Uterus (tissue), 4 donors: ENCODE measurements at regions of chr4 and their contacts with region 1.

Region 1: GRCh38 chr4:38675146-38676121 is 11.4 kb downstream of the KLF3 start:
- DNase-seq: peak; percentile 74 to 85
- H3K4me3 ChIP-seq: no peak overlapping the region
- H3K27ac ChIP-seq: peak overlapping the region; percentile 93 to 99
- H3K4me1 ChIP-seq: peaks cover 36 to 50% of the 10 kb centered on the region in 2 donors
- H3K27me3 ChIP-seq: no peaks in the 10 kb centered on the region
- CTCF ChIP-seq: peak; percentile 86 to 97 (median 90)
- POLR2A ChIP-seq: no peak

Region 2: GRCh38 chr4:38062088-38062893 is 613.1 kb before region 1 on chr4:
- intact Hi-C with region 1: loop called (anchors 10 kb)
- DNase-seq: peak; percentile 80 to 87
- H3K4me3 ChIP-seq: peak overlapping the region in 1 of 2 donors; percentile 33
- H3K27ac ChIP-seq: peak overlapping the region; percentile 74 to 88
- H3K4me1 ChIP-seq: peaks cover 9 to 10% of the 10 kb centered on the region in 2 donors
- H3K27me3 ChIP-seq: no peaks in the 10 kb centered on the region
- CTCF ChIP-seq: peak; percentile 68 to 86 (median 80)
- POLR2A ChIP-seq: no peak

Region 3: GRCh38 chr4:38179690-38180377 is 495.6 kb before region 1 on chr4:
- intact Hi-C with region 1: loop called (anchors 10 kb)
- DNase-seq: peak; percentile 66 to 74
- H3K4me3 ChIP-seq: no peak overlapping the region
- H3K27ac ChIP-seq: peak overlapping the region in 1 of 2 donors; percentile 31
- H3K4me1 ChIP-seq: peaks cover 0 to 5% of the 10 kb centered on the region in 2 donors
- H3K27me3 ChIP-seq: no peaks in the 10 kb centered on the region
- CTCF ChIP-seq: peak; percentile 82 to 87 (median 85)
- POLR2A ChIP-seq: no peak

Region 4: DNA sequence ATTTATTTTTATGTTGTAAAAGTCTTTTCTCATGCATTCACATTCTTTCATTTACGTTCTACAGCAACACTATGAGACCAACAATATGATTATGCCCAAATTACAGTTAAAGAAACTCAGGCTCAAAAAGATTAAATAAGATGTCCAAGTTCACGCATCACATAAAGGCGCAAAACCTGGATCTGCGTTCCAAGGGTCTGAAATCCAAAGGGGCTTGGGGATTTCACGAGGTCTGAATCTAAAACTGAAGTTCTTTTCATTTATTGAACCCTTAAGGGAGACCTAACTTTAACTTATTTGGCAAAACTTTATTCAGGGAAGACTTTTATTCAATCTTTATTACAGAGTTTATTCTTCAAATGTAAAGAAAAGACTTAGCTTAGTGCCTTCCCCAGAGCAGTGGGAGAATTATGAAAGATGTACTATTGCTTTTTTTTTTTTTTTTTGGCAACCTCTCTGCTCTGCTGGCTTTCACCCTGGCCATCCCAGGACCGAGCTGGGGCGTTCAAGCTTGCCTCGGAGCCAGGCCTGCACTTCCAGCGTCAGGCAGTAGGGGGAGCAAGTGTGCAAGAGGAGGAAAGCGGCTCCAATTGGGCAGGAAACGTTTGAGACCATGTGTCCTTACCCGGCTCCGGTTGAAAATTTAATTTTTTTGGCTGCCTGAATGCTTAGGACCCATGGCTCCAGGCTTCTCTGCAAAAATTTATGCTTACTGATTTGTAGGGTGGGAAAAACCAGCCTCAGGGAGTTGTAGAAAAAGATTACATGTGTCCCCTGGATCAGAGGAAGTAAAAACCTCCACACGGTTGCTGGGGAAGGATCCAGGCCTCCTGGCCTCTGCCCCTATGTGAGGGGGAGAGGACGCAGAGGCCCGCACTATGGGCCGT is 355.7 kb before region 1 on chr4:
- intact Hi-C with region 1: loop called (anchors 10 kb)
- DNase-seq: peak; percentile 95 to 98
- H3K4me3 ChIP-seq: peak overlapping the region; percentile 21 to 26
- H3K27ac ChIP-seq: peak overlapping the region; percentile 85 to 96
- H3K4me1 ChIP-seq: no peaks in the 10 kb centered on the region
- H3K27me3 ChIP-seq: no peaks in the 10 kb centered on the region
- CTCF ChIP-seq: peak; percentile 89 to 99 (median 96)
- POLR2A ChIP-seq: no peak

Region 5: GRCh38 chr4:38710053-38710452 is 34.6 kb after region 1 on chr4:
- intact Hi-C with region 1: no loop called
- DNase-seq: no peak
- H3K4me3 ChIP-seq: no peak overlapping the region
- H3K27ac ChIP-seq: no peak overlapping the region
- H3K4me1 ChIP-seq: no peaks in the 10 kb centered on the region
- H3K27me3 ChIP-seq: no peaks in the 10 kb centered on the region
- CTCF ChIP-seq: no peak
- POLR2A ChIP-seq: no peak